Cardiac septum (tissue), 1 donor: ENCODE measurements at regions of chr7 and their contacts with region 1.

Region 1: GRCh38 chr7:152436111-152436930 is 518 bp upstream of the KMT2C start:
- DNase-seq: peak; percentile 96

Region 2: DNA sequence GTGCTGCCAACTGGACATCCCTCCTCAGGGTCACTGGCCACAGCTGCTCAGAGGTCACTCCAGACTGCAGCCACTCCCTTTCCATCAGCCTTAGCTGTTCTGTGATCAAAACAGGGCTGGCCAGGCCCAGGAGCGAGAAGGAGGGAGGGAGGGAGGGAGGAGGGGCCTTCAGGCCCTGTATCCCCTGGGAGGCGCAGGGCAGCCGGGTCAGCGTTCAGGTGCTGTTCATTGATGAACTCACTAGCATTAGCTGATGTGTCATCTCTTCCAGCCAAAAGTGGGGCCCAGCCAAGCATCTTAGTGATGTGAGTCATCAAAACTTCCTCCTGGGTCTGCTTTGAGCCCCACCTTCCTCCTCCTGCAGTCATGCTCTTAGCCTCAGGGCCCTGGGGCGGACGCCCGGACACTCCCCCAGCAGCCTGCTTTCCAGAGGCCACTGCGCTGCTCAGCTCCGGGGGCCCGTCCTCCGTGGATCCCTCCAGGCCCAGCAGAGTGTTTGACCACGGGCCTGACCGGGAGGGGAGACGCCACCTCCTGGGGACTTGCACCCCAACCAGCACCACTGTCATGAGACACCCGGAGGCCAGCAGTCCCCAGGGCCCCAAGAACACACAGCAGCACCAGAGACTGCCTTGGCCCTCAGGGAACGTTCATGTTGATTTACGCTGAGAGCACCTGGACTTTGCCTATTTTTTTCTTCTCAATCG is 708.6 kb before region 1 on chr7:
- intact Hi-C with region 1: no loop called
- DNase-seq: peak; percentile 86

Region 3: DNA sequence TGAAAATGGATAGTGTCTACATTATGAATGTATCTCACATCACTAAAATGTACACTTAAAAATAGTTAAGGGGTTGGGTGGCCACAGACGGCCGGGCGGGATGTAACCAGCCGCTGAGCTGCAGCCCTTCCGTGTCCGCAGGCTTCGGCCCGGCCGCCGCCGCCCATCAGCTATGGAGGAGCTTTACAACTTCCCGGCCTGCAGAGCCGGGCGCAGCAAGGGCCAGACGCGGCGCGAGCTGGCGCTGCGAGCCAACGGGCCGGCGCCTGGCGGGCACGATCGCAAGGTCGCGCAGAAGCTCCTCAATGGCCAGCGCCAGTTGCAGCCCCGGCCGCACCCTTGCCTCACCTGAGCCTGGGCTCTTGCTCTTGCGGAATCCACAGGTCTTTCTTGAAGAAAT is 69.7 kb before region 1 on chr7:
- intact Hi-C with region 1: loop called (anchors 10 kb)
- DNase-seq: no peak

Region 4: DNA sequence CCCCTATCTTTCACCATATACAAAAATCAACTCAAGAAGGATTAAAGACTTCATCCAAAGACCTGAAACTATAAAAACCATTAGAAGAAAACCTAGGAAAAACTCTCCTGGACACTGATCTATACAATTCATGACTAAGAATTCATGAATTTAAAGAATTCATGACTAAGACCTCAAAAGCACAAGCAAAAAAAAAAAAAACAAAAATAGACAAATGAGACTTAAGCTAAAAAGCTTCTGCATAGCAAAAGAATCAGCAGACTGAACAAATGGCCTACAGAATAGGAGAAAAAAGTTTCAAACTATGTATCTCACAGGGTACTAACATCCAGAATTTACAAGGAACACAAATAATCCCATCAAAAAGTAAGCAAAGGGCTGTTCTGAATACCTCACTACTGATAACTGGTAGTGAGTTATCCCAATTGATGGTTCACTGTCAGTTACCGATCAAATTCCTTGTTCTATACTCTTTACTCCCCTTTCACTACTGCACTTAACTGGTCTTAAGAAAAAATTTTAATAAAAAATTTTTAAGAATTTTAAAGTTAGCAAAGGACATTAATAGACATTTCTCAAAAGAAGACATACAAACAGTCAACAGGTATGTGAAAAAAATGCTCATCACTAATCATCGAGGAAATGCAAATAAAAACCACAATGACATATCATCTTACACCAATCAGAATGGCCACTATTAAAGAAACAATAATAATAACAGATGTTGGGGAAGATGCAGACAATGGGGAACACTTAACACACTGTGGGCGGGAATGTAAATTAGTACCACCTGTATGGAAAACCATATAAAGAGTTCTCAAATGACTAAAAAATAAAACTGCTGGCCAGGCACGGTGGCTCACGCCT is 33.7 kb before region 1 on chr7:
- intact Hi-C with region 1: no loop called
- DNase-seq: no peak